Naive thymus-derived CD8-positive, alpha-beta T cell (primary cell): ENCODE measurements at regions of chr10 and their contacts with region 1.

Region 1: DNA sequence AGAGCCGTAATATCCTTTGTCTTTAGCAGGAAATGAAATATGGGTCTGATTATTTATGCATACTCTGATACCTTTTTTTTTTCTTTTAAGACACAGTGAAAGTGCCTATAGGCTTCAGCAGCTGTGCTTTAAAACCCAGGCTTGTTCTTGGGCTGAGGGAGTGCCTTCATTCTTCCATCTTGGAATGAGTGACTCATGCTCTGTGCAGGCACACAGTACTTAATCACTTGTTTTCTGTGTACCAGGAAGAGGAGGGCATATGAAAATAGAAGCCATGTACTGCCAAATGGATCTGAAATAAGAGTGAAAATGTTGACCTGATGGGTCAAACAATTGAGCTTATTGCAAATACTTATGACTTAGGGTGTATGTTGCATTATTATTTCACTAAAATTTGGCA is 12.0 kb downstream of the INPP5F start:
- DNase-seq: no peak
- ATAC-seq: peak in 1 of 2 donors; percentile 39
- H3K4me3 Mint-ChIP-seq: peak overlapping the region in 4 of 10 donors; percentile 6 to 26 (median 14)
- H3K27ac Mint-ChIP-seq: peak overlapping the region in 3 of 10 donors; percentile 30 to 46 (median 31)
- H3K4me1 Mint-ChIP-seq: peaks cover 8 to 38% (median 18%) of the 10 kb centered on the region in 4 donors
- H3K27me3 Mint-ChIP-seq: no peaks in the 10 kb centered on the region

Region 2: GRCh38 chr10:119028900-119029612 is 708.8 kb before region 1 on chr10:
- POLR2A ChIA-PET with region 1: interaction called, 10 read pairs
- DNase-seq: peak; percentile 61 to 89 (median 70)
- ATAC-seq: peak; percentile 76 to 83
- H3K4me3 Mint-ChIP-seq: peak overlapping the region; percentile 62 to 91 (median 80)
- H3K27ac Mint-ChIP-seq: peak overlapping the region in 1 of 10 donors; percentile 18
- H3K4me1 Mint-ChIP-seq: peaks cover 3 to 18% (median 8%) of the 10 kb centered on the region in 4 donors
- H3K27me3 Mint-ChIP-seq: peaks cover 0 to 2% (median 0%) of the 10 kb centered on the region in 5 donors

Region 3: GRCh38 chr10:119725828-119726675 is 11.8 kb before region 1 on chr10 and contains the start of gene INPP5F:
- POLR2A ChIA-PET with region 1: interaction called, 14 read pairs
- DNase-seq: peak; percentile 90 to 99 (median 96)
- ATAC-seq: peak; percentile 88 to 92
- H3K4me3 Mint-ChIP-seq: peak within 1 kb of the TSS; percentile 81 to 94 (median 91)
- H3K27ac Mint-ChIP-seq: peak within 1 kb of the TSS; percentile 27 to 93 (median 81)
- H3K4me1 Mint-ChIP-seq: peaks cover 5 to 41% (median 26%) of the 10 kb centered on the region in 4 donors
- H3K27me3 Mint-ChIP-seq: no peaks in the 10 kb centered on the region
- polyA plus RNA-seq, gene INPP5F: 1.4 to 2.5 (median 2.4) TPM